Activated naive CD4-positive, alpha-beta T cell treated with anti-CD3 and anti-CD28 coated beads, Interleukin-2, amount 10 ng/mL, durations not matched to agents 7 days and 5 days (primary cell): ENCODE measurements at regions of chr7 and their contacts with region 1.

Region 1: DNA sequence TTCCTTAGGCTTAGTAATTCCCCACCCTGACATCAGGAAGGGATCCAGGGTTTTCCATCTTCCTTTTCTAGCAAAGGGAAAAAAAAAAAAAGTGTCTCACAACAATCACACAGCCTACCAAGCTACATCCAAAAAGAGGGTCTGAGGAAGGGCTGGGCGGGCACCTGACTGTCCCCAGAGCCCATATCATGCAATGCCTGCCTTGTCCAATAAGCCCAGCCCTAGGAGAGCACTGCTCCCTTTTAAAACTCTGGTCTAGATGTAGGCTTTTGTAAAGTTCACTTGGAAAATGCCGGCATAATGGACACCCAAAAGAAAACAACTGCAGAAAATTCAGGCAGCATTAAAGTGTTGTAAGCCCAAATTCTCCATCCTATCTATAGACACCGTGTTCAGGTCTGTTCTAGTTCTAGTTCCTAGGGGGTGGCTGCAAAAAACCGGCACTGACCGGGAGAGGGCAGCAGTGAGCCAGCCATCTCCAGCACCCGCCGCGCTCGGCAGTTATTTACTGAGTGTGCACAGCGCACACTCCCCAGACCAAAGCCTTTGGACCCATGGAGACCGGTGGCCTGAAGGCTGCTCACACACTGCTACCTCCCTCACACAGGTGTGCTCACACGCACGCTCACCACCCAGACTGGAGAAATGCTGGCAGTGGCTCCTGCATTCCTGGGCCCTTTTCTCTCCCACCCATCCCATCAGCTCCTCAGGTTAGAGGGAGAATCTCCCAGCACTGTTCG is 48.7 kb downstream of the PODXL start:
- DNase-seq: peak; percentile 88
- H3K4me3 Mint-ChIP-seq: no peak overlapping the region
- H3K27ac Mint-ChIP-seq: no peak overlapping the region
- H3K4me1 Mint-ChIP-seq: peaks cover 20% of the 10 kb centered on the region
- H3K27me3 Mint-ChIP-seq: peaks cover 25% of the 10 kb centered on the region

Region 2: DNA sequence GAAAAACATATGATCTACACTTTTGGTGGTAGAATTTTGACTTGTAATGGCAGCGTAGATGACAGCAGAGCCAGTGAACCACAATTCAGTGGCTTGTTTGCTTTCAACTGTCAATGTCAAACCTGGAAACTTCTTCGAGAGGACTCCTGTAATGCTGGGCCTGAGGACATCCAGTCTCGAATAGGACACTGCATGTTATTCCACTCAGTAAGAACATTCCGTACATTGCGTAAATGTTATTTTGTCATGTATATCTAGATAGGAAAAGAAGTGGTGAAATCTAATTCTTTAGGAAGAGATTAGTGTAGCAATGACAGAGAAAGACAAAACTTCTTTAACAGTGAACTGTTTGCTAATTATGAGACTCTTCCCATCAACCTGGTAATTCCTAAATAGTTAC is 64.3 kb before region 1 on chr7:
- CTCF ChIA-PET with region 1: no interaction called
- DNase-seq: no peak
- H3K4me3 Mint-ChIP-seq: no peak overlapping the region
- H3K27ac Mint-ChIP-seq: no peak overlapping the region
- H3K4me1 Mint-ChIP-seq: no peaks in the 10 kb centered on the region
- H3K27me3 Mint-ChIP-seq: no peaks in the 10 kb centered on the region

Region 3: DNA sequence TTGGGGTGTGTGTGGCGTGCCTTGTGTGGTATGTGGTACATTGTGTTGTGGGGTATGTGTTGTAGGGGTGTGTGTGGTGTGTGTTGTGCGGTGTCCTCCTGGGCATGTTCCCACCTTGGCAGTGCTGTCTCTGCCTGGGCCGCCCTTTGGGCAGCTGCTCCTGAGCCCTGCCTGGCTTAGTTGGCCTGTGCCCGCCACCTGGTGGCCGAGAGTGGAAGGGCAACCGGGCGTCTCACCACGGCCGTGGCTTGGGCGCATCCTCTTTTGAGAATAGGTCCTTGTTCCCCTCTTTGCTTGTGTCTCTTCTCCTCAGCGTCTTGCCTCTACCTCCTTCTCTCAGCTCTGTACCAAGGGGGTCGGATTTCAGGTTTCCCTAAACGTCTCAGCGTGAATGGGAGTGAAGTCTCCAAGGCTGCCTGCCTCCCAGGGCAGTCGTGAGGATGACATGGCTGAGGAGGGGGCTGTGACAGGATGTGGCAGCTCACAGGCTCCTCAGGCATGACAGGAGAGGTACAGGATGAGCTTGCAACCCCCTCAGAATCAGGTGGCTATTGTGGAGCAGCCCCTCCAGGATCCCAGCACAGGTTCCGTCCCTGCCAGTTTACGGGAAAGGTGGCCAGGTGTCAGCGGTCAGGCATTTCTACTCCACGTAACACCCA is 147.0 kb after region 1 on chr7:
- CTCF ChIA-PET with region 1: interaction called, 11 read pairs
- DNase-seq: peak; percentile 88
- H3K4me3 Mint-ChIP-seq: no peak overlapping the region
- H3K27ac Mint-ChIP-seq: no peak overlapping the region
- H3K4me1 Mint-ChIP-seq: no peaks in the 10 kb centered on the region
- H3K27me3 Mint-ChIP-seq: peaks cover 12% of the 10 kb centered on the region